ENCODE measurements at regions of chr10 and their contacts with region 1.

Region 1: GRCh38 chr10:75401569-75402485 is at the start of gene ZNF503:
- H3K4me3 ChIP-seq: peak within 1 kb of the TSS; percentile 69
- H3K27ac ChIP-seq: peak within 1 kb of the TSS; percentile 100
- H3K4me1 ChIP-seq: no peaks in the 10 kb centered on the region
- CTCF ChIP-seq: peak; percentile 69

Region 2: DNA sequence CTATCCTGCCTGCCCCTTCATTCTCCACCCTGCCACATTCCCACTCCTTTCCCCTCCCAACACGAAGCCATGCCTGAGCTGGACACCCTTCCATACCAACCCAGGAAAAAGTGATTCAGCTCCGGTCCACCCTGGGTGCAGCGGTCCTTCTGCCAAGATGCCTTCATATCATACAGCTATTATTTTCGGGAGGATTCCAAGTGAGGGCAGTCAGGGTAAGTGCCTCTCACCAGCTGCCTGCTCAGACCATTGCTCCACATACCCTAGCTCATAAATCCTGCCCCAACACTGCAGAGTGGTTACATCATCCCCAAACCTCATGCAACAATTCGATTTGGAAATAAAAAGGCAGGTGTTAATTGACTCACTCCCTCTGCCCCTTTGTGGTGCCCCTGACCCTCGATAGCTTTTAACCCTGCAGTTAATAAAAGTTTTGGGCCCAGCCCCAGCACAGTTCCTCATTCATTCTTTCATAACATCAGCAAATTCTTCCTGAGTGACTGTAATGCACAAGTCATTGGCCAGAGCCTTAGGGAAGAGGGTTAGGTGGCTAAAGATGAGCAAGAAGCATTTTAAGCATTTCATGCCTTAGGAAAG is 42.9 kb before region 1 on chr10:
- CTCF ChIA-PET with region 1: interaction called, 3 read pairs
- POLR2A ChIA-PET with region 1: interaction called, 13 read pairs
- H3K4me3 ChIP-seq: no peak overlapping the region
- H3K27ac ChIP-seq: peak overlapping the region; percentile 76
- H3K4me1 ChIP-seq: peaks cover 16% of the 10 kb centered on the region
- CTCF ChIP-seq: no peak

Region 3: DNA sequence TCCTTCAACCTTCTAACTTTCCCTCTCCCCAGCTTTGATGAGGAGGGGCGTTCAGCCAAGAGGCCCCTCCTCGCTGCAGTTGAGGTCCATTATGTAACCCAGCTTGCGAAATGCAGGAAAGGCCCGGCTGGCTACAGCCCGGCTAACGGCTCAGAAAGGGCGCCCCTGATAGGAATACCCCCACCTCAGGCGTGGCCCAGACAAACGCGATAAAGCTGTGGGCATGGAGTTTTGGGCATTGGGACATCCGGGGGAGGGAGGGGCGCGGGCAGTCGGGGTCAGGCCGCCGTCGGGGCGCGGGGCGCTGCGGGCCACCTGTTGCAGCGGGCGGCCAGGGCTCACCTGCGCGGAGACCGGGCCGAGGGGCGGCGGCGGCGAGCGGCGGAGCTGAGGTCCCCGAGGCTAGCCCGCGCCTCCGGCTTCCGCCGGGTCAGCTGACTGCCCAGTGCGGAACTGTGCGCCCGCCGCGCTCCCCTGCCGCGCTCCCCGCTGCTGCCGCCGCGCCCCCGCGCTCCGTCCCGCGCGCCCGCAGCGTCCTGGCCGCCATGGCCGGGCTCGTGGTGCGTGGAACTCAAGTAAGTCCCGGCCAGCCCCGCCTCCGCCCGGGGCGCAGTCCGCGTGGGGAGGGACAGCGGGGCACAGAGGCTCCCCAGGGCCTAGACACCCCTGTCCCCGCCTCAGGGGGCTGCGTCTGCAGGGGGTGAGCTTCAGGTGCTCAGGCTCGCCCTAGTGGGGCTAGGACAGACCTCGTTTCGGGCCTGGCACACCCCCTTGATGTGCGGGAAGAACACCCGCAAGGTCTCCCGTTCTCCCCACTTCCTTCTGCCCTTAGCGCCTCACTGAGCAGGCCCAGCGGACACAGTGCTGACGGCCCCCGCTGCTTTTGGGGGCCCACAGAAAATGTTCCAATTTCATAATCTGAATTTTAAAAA is 29.6 kb after region 1 on chr10 and contains the start of gene LRMDA:
- CTCF ChIA-PET with region 1: interaction called, 4 read pairs
- POLR2A ChIA-PET with region 1: interaction called, 15 read pairs
- H3K4me3 ChIP-seq: no peak within 1 kb of the TSS
- H3K27ac ChIP-seq: peak within 1 kb of the TSS; percentile 67; the same call in 1 of the 2 replicates
- H3K4me1 ChIP-seq: peaks cover 24% of the 10 kb centered on the region; the same call in 1 of the 2 replicates
- CTCF ChIP-seq: no peak

Region 4: GRCh38 chr10:75651417-75651816 is 249.6 kb after region 1 on chr10:
- CTCF ChIA-PET with region 1: interaction called, 7 read pairs
- POLR2A ChIA-PET with region 1: interaction called, 10 read pairs
- H3K4me3 ChIP-seq: no peak overlapping the region
- H3K27ac ChIP-seq: no peak overlapping the region
- H3K4me1 ChIP-seq: peaks cover 5% of the 10 kb centered on the region; the same call in 1 of the 2 replicates
- CTCF ChIP-seq: no peak